A673 (cell line): ENCODE measurements at regions of chr1 and their contacts with region 1.

Region 1: DNA sequence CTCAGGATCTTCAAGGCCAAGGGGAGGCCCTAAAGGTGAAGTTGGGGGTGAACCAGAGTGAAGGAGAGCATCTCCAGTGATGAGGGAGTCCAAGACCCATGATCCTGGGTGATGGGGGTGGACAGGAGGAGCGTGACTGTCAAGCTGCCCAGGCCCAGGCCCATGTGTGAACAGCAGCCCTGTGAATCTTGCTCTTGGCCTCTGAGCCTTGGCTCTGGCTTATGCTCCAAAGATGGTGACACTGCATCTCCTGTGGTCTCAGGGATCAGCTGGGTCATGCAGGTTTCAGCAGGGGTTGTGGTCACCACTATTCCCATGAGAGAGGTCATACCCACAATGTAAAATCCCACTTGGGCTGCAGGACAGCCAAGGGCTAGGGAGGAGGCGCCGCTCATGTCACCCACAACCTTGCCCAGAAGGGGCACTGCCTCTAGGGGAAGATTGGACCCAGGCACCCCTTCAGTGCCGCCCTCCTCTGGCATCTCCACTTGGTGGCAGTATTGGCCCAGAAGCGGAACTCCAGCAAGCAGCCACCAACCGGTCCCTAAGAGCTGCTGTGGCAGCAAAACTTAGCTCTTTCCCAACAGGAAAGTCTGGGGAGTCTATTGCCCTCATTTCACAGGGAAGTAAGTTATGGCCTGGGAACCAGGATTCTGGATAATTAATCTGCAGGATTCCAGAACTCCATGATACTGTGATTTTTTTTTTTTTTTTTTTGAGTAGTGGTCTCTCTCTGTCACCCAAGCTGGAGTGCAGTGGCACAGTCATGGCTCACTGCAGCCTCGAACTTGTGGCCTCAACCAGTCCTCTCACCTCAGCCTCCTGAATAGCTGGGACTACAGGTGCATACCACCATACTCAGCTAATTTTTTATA is 7.5 kb upstream of the WNT3A start:
- DNase-seq: peak; percentile 83
- H3K4me3 ChIP-seq: no peak overlapping the region
- H3K27ac ChIP-seq: no peak overlapping the region
- H3K4me1 ChIP-seq: no peaks in the 10 kb centered on the region
- H3K27me3 ChIP-seq: peaks cover 42% of the 10 kb centered on the region
- CTCF ChIP-seq: peak; percentile 87

Region 2: GRCh38 chr1:228515200-228515834 is 516.0 kb after region 1 on chr1:
- CTCF ChIA-PET with region 1: interaction called, 6 read pairs
- POLR2A ChIA-PET with region 1: no interaction called
- intact Hi-C with region 1: loop called (anchors 1 kb)
- DNase-seq: peak; percentile 59
- H3K4me3 ChIP-seq: no peak overlapping the region
- H3K27ac ChIP-seq: no peak overlapping the region
- H3K4me1 ChIP-seq: no peaks in the 10 kb centered on the region
- H3K27me3 ChIP-seq: peaks cover 48% of the 10 kb centered on the region
- CTCF ChIP-seq: peak; percentile 70